ENCODE measurements at regions of chr15 and their contacts with region 1.

Region 1: GRCh38 chr15:81000624-81001151 is at the start of gene TLNRD1:
- H3K4me3 Mint-ChIP-seq: peak within 1 kb of the TSS; percentile 83
- H3K27ac Mint-ChIP-seq: peak within 1 kb of the TSS; percentile 95
- H3K4me1 Mint-ChIP-seq: peaks cover 40% of the 10 kb centered on the region
- H3K27me3 Mint-ChIP-seq: no peaks in the 10 kb centered on the region

Region 2: DNA sequence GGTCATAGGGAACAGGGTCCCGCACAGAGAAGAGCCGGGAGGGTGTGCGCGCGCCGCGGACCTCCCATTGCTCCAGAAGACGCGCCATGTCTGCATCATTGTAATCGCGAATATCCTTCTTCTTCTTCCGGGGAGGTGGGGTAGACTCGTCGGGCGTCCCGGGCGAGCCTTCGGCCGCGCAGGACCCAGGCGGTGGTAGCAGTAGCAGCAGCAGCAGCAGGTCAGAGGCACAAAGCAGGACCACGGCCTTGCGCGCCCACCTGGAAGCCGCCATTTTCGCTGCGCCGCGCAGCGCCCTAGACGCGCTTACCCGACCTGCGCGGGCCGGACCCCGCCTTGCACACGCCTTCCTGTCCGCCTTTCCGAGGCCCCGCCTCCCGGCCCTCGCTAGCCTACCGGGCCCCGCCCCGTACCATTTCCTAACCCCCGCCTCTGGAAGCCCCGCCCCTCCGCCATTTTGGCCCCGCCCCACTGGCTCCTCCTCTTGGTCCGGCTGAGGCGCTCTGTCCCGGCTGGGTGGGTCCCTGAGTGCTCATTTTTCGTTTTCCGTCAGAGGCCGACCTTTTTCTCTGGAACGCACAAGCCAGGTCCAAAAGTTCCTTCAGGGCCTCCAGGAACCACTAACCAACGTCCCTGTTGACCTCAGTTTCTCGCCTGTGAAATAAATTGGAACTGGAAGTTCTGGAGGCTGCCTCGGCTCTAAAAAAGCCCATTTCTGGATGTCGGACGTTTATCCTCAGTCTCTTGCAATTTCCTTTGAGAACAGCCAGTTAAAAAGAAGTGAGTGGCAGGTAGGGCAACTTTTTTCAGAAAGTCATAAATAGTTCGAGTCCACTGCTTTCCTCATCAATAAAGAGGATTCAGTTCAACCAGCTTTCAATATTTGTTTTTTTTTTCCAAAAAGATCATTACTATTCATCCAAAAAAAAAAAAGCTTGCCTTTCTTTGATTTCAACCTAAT is 10.9 kb before region 1 on chr15 and contains the start of gene MESD:
- intact Hi-C with region 1: loop called (anchors 1 kb)
- H3K4me3 Mint-ChIP-seq: peak within 1 kb of the TSS; percentile 90
- H3K27ac Mint-ChIP-seq: peak within 1 kb of the TSS; percentile 97
- H3K4me1 Mint-ChIP-seq: peaks cover 56% of the 10 kb centered on the region
- H3K27me3 Mint-ChIP-seq: peaks cover 3% of the 10 kb centered on the region

Region 3: GRCh38 chr15:81029414-81030300 is 29.0 kb after region 1 on chr15:
- intact Hi-C with region 1: loop called (anchors 2 kb)
- H3K4me3 Mint-ChIP-seq: peak overlapping the region; percentile 4
- H3K27ac Mint-ChIP-seq: peak overlapping the region; percentile 82
- H3K4me1 Mint-ChIP-seq: peaks cover 72% of the 10 kb centered on the region
- H3K27me3 Mint-ChIP-seq: peaks cover 2% of the 10 kb centered on the region

Region 4: DNA sequence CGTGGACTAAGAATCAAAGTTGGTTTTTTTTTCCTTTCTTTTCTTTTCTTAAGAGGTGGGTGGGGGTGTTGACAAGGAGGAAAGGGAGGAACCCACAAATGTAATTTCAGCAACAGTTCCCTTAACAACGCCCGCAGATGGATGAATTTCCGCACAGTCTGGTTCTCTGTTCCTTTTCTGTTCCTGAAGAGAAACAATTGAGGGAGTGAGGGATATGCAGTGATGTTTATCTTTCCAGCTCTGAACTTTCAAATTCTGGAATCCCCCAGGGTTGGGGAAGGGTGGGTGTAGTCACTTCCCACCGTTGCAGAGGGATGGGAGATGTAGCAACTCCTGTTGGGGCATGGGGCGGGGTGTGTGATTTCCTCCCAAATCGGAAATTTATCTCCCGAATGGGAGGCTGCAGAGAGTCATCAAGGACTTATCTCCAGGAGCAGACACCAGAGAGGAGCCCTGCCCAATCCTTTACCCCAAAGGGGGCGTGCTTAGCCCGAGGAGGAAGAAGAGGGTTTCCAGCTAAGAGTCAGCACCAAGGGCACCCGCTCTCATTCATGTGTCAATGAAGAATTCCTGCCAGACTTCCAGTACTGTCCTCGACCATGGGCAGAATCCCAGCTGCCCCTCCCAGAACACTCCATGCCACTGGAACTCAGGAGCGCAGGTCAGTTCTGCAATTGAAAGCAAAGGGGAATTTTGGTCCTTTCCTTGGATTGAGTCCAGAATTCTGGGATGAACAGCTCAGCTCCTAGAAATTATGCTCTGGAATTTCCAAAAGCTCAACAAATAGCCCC is 98.4 kb after region 1 on chr15:
- intact Hi-C with region 1: loop called (anchors 1 kb)
- H3K4me3 Mint-ChIP-seq: peak overlapping the region; percentile 61
- H3K27ac Mint-ChIP-seq: peak overlapping the region; percentile 78
- H3K4me1 Mint-ChIP-seq: peaks cover 26% of the 10 kb centered on the region
- H3K27me3 Mint-ChIP-seq: peaks cover 64% of the 10 kb centered on the region

Region 5: GRCh38 chr15:81111510-81112470 is 111.1 kb after region 1 on chr15:
- intact Hi-C with region 1: no loop called
- H3K4me3 Mint-ChIP-seq: no peak overlapping the region
- H3K27ac Mint-ChIP-seq: peak overlapping the region; percentile 3
- H3K4me1 Mint-ChIP-seq: peaks cover 19% of the 10 kb centered on the region
- H3K27me3 Mint-ChIP-seq: peaks cover 25% of the 10 kb centered on the region

Measured in dendritic cell treated with granulocyte-macrophage colony-stimulating factor and Interleukin-4, amounts not matched to agents 40 ng/mL and 50 ng/mL, for 4 days (primary cell).